H1 (cell line): ENCODE measurements at regions of chr10 and their contacts with region 1.

Region 1: DNA sequence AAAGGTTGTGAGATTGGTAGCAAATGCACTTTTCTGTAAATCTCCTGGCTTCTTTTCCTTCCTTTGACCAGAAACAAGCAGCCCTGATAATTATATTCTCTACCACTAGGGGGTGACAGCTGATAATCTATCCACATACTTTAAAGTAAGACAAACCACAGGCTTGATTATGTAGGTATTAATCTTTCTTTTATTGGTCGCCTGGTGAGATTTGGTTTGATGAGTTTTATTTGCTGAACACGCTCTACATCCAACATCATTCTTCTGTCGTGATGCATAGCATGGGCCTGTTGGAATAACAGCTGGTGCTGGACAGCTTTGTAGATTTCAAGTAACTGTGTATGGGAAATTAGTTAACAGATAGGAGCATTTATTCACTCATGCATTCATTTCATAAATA is 63.5 kb downstream of the ZNF365 start:
- DNase-seq: no peak
- H3K4me3 ChIP-seq: no peak overlapping the region
- H3K27ac ChIP-seq: no peak overlapping the region
- H3K4me1 ChIP-seq: 0 out of 7 replicates have a peak, but pooled peaks cover 0 to 2% (median 0%) of the 10 kb centered on the region in 4 experiments
- H3K27me3 ChIP-seq: no peaks in the 10 kb centered on the region
- CTCF ChIP-seq: peak in 2 of 3 experiments; percentile 36 to 59; a peak in 2 of 4 replicates
- EP300 ChIP-seq: no peak
- POLR2A ChIP-seq: no peak
- RAD21 ChIP-seq: peak; percentile 79

Region 2: DNA sequence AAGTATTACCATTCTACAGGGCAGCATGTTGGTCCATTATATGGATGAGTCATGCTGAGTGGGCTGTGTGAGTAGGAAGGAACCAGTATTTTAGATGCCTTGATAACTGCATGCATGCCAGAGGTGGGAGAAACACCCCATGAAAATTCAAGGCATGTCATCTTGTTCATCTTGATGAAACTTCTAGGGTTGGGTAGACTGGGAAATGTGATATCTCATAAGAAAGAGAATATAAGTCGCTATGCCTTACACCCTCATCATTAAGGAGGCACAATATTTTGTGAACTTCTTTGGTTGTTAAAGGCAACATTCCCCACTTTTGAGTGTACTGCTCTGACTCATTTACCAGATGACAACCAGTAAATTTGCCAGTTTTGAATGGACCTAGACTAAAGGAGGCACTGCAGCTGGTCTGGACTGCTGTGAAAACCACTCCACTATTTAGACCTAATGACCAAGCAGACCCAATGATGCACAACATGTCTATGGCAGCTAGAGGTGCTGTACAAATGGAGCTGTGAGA is 15.6 kb before region 1 on chr10:
- CTCF ChIA-PET with region 1: interaction called, 10 read pairs
- POLR2A ChIA-PET with region 1: no interaction called
- DNase-seq: no peak
- H3K4me3 ChIP-seq: no peak overlapping the region
- H3K27ac ChIP-seq: no peak overlapping the region
- H3K4me1 ChIP-seq: peaks cover 0 to 5% (median 0%) of the 10 kb centered on the region in 4 experiments; a peak in 1 of 7 replicates
- H3K27me3 ChIP-seq: peaks cover 9 to 23% (median 10%) of the 10 kb centered on the region in 4 experiments; a peak in 6 of 7 replicates
- CTCF ChIP-seq: no peak
- EP300 ChIP-seq: no peak
- POLR2A ChIP-seq: no peak
- RAD21 ChIP-seq: no peak

Region 3: GRCh38 chr10:62451611-62451975 is 13.9 kb after region 1 on chr10:
- CTCF ChIA-PET with region 1: interaction called, 63 read pairs
- POLR2A ChIA-PET with region 1: interaction called, 3 read pairs
- DNase-seq: no peak
- H3K4me3 ChIP-seq: no peak overlapping the region
- H3K27ac ChIP-seq: no peak overlapping the region
- H3K4me1 ChIP-seq: no peaks in the 10 kb centered on the region
- H3K27me3 ChIP-seq: no peaks in the 10 kb centered on the region
- CTCF ChIP-seq: no peak
- EP300 ChIP-seq: no peak
- POLR2A ChIP-seq: no peak
- RAD21 ChIP-seq: no peak

Region 4: DNA sequence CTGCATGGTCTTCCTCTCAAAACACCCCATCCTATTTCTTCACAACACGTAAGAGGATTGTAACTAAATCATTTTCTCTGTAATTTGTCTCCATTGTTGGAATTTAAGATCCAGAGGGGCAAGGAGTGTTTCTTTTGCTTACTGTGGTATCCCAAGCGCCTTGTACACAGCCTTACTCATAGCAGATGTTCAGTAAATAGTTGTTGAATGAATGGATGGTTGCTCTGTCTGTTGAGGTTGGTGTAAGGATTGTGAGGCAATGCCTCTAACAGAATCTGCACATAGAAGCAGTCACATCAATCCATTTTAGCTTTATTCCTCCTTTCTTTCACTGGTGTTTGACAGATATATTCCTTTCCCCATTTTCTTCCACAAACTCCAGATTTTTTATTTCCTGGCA is 26.6 kb after region 1 on chr10:
- CTCF ChIA-PET with region 1: interaction called, 19 read pairs
- POLR2A ChIA-PET with region 1: no interaction called
- DNase-seq: no peak
- H3K4me3 ChIP-seq: no peak overlapping the region
- H3K27ac ChIP-seq: no peak overlapping the region
- H3K4me1 ChIP-seq: no peaks in the 10 kb centered on the region
- H3K27me3 ChIP-seq: peaks cover 0 to 1% (median 0%) of the 10 kb centered on the region in 4 experiments; a peak in 1 of 7 replicates
- CTCF ChIP-seq: no peak
- EP300 ChIP-seq: no peak
- POLR2A ChIP-seq: no peak
- RAD21 ChIP-seq: no peak

Region 5: GRCh38 chr10:62554632-62555199 is 117.0 kb after region 1 on chr10:
- CTCF ChIA-PET with region 1: interaction called, 10 read pairs
- POLR2A ChIA-PET with region 1: no interaction called
- DNase-seq: no peak
- H3K4me3 ChIP-seq: no peak overlapping the region
- H3K27ac ChIP-seq: no peak overlapping the region
- H3K4me1 ChIP-seq: no peaks in the 10 kb centered on the region
- H3K27me3 ChIP-seq: no peaks in the 10 kb centered on the region
- CTCF ChIP-seq: peak in 2 of 3 experiments; percentile 52 to 85; a peak in 3 of 4 replicates
- EP300 ChIP-seq: no peak
- POLR2A ChIP-seq: no peak
- RAD21 ChIP-seq: peak; percentile 71 to 76